GM10248 (cell line): ENCODE measurements at regions of chr12 and their contacts with region 1.

Region 1: GRCh38 chr12:82554529-82554928 is 132.2 kb upstream of the TMTC2 start:
- DNase-seq: peak; percentile 34
- CTCF ChIP-seq: no peak

Region 2: DNA sequence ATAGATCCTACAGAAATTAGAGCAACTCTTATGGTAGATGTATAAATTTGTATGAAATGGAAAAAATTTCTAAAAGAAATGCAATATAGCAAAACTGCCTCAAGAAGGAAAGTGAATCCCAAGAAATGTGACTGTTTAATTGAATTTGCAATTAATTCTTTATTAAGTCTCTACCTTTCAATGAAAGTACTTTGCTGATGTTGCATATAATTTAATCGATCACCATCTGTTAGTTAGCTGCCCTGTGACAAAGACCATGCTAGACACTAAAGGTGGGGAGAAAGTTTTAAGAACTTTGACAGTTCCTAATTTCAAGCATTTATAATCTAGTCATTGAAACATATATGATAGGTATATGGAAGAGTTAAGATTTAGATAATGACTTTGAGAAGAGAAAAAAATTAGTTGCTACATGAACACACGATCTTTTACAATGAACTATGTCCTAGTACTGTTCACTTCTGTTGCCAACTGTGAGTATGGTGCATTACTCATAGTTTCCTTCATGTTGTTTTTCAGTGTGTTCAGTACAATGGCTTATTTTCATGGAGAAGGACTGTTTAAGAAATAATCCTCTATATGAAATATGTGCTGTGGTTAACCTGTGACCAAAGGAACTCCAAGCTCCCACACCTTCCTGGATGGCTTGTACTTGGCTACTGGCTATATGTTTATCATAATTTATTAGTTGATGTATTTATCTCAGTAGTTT is 67.8 kb before region 1 on chr12:
- CTCF ChIA-PET with region 1: no interaction called
- POLR2A ChIA-PET with region 1: no interaction called
- DNase-seq: no peak
- CTCF ChIP-seq: no peak

Region 3: GRCh38 chr12:82529101-82529500 is 25.4 kb before region 1 on chr12:
- CTCF ChIA-PET with region 1: interaction called, 14 read pairs
- POLR2A ChIA-PET with region 1: no interaction called
- DNase-seq: no peak
- CTCF ChIP-seq: no peak

Region 4: GRCh38 chr12:82723093-82723492 is 168.6 kb after region 1 on chr12:
- CTCF ChIA-PET with region 1: no interaction called
- POLR2A ChIA-PET with region 1: no interaction called
- DNase-seq: no peak
- CTCF ChIP-seq: no peak